ENCODE measurements at regions of chr1 and their contacts with region 1.

Region 1: GRCh38 chr1:71019233-71019969 is 28.2 kb downstream of the PTGER3 start:
- DNase-seq: peak in 2 of 5 donors; percentile 13 to 30
- ATAC-seq: peak; percentile 37 to 93 (median 73)
- H3K4me3 ChIP-seq: no peak overlapping the region
- H3K27ac ChIP-seq: no peak overlapping the region
- H3K4me1 ChIP-seq: peaks cover 0 to 7% (median 0%) of the 10 kb centered on the region in 12 donors
- H3K27me3 ChIP-seq: peaks cover 0 to 6% (median 0%) of the 10 kb centered on the region in 9 donors
- CTCF ChIP-seq: no peak
- POLR2A ChIP-seq: no peak

Region 2: GRCh38 chr1:70819785-70820184 is 199.6 kb before region 1 on chr1:
- intact Hi-C with region 1: loop called in 1 of 10 experiments (anchors 10 kb)
- DNase-seq: no peak
- ATAC-seq: no peak
- H3K4me3 ChIP-seq: no peak overlapping the region
- H3K27ac ChIP-seq: no peak overlapping the region
- H3K4me1 ChIP-seq: peaks cover 0 to 16% (median 0%) of the 10 kb centered on the region in 12 donors
- H3K27me3 ChIP-seq: no peaks in the 10 kb centered on the region
- CTCF ChIP-seq: no peak
- POLR2A ChIP-seq: no peak

Measured in heart left ventricle (tissue), 16 donors.